Prostate gland (tissue), 2 donors: ENCODE measurements at regions of chr2 and their contacts with region 1.

Region 1: DNA sequence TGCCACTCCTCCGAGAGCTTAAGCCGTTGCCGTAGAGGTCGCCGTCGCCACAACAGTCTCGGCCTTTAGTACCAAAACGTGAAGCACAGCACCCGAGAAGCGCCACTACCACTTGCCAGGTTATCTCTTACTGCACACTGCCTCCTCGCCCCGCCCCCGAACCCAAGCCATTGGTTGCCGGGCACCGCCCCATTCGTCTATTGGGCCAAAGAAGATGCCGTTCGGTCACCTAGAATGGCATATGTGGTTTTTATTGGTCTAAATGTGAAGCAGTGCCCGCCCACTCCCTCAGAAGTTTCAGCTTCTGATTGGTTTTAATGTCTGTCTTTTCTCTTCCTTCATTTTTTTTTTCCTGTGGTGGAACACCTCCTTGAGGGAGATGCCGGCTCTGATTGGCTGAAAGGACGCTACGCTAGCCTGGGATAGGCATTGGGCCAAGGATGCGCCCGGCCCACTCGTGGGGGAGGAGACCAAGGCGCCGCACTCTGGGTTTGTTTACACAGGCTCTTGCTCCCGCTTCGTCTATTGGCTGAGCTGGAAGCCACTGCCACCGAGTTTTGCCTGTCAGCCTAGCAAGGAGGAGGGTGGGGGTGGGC is at the start of gene PAIP2B:
- DNase-seq: peak; percentile 99
- H3K4me3 ChIP-seq: peak within 1 kb of the TSS; percentile 72 to 83
- H3K27ac ChIP-seq: peak within 1 kb of the TSS; percentile 75 to 85
- H3K4me1 ChIP-seq: no peaks in the 10 kb centered on the region
- H3K27me3 ChIP-seq: no peaks in the 10 kb centered on the region
- CTCF ChIP-seq: peak in 2 of 4 experiments; percentile 5 to 9
- POLR2A ChIP-seq: peak; percentile 87
- total RNA-seq, gene PAIP2B: 5.9 to 12.8 TPM

Region 2: DNA sequence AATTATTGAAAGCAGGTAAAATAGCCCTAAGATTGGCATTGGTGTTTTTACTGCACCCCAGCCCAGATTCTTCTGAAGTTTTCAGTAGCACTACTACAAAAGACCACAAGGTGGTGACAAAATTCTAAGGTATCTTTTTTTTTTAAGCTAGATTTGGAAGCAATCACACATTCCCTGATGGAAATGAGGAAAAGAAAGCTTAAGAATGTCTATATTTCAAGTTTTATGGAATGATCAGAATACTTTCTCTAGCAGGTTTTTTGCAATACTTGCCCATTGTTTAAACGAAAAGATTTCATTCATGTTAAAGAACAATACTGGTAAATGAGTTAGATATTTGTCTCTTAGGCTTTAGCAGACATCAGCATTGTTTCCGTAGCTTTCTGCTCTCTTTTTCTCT is 72.4 kb after region 1 on chr2:
- intact Hi-C with region 1: no loop called
- DNase-seq: no peak
- H3K4me3 ChIP-seq: no peak overlapping the region
- H3K27ac ChIP-seq: no peak overlapping the region
- H3K4me1 ChIP-seq: no peaks in the 10 kb centered on the region
- H3K27me3 ChIP-seq: no peaks in the 10 kb centered on the region
- CTCF ChIP-seq: peak; percentile 30 to 84 (median 70)
- POLR2A ChIP-seq: no peak

Region 3: GRCh38 chr2:71331581-71332434 is 104.7 kb after region 1 on chr2 and contains the start of gene ZNF638:
- intact Hi-C with region 1: loop called (anchors 10 kb)
- DNase-seq: peak; percentile 89
- H3K4me3 ChIP-seq: peak within 1 kb of the TSS; percentile 68 to 91
- H3K27ac ChIP-seq: peak within 1 kb of the TSS; percentile 91 to 94
- H3K4me1 ChIP-seq: no peaks in the 10 kb centered on the region
- H3K27me3 ChIP-seq: no peaks in the 10 kb centered on the region
- CTCF ChIP-seq: peak; percentile 66 to 85 (median 83)
- POLR2A ChIP-seq: peak; percentile 84
- total RNA-seq, gene ZNF638: 137 to 164 TPM

Region 4: GRCh38 chr2:71510196-71510807 is 283.2 kb after region 1 on chr2:
- intact Hi-C with region 1: loop called (anchors 2 kb)
- DNase-seq: peak; percentile 53
- H3K4me3 ChIP-seq: no peak overlapping the region
- H3K27ac ChIP-seq: no peak overlapping the region
- H3K4me1 ChIP-seq: no peaks in the 10 kb centered on the region
- H3K27me3 ChIP-seq: no peaks in the 10 kb centered on the region
- CTCF ChIP-seq: peak; percentile 75 to 88 (median 87)
- POLR2A ChIP-seq: no peak